ENCODE measurements at regions of chr2 and their contacts with region 1.

Region 1: GRCh38 chr2:171319164-171319810 is 114.5 kb downstream of the METTL8 start:
- DNase-seq: peak; percentile 78
- ATAC-seq: peak; percentile 80
- H3K4me3 Mint-ChIP-seq: peak overlapping the region; percentile 59
- H3K27ac Mint-ChIP-seq: peak overlapping the region; percentile 98
- H3K4me1 Mint-ChIP-seq: peaks cover 67% of the 10 kb centered on the region
- H3K27me3 Mint-ChIP-seq: no peaks in the 10 kb centered on the region

Region 2: GRCh38 chr2:170829036-170829435 is 490.3 kb before region 1 on chr2:
- CTCF ChIA-PET with region 1: no interaction called
- POLR2A ChIA-PET with region 1: no interaction called
- intact Hi-C with region 1: no loop called
- DNase-seq: no peak
- ATAC-seq: no peak
- H3K4me3 Mint-ChIP-seq: no peak overlapping the region
- H3K27ac Mint-ChIP-seq: no peak overlapping the region
- H3K4me1 Mint-ChIP-seq: no peaks in the 10 kb centered on the region
- H3K27me3 Mint-ChIP-seq: peaks cover 54% of the 10 kb centered on the region

Region 3: DNA sequence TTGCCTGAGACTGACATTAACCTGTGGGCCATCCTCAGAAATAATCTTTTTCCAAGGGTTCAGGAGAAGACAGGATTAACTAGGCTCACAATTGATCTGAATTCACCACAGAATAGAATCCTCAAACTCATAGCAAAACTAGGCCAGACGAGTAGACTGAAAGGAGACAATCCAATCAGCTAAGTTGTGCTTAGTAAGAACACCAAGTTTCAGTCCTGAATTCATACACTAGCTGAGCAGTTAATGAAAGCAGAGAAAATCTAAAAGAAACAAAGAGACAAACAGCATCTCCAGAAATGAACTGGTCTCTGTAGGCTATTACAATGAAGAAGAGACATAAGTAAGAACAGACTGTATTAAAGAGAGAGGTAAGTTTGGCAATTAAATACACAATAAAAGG is 300.8 kb before region 1 on chr2:
- CTCF ChIA-PET with region 1: no interaction called
- POLR2A ChIA-PET with region 1: no interaction called
- intact Hi-C with region 1: loop called in 1 of 2 experiments (anchors 1 kb)
- DNase-seq: no peak
- ATAC-seq: peak; percentile 97
- H3K4me3 Mint-ChIP-seq: peak overlapping the region; percentile 4
- H3K27ac Mint-ChIP-seq: peak overlapping the region; percentile 63
- H3K4me1 Mint-ChIP-seq: peaks cover 43% of the 10 kb centered on the region
- H3K27me3 Mint-ChIP-seq: no peaks in the 10 kb centered on the region

Region 4: DNA sequence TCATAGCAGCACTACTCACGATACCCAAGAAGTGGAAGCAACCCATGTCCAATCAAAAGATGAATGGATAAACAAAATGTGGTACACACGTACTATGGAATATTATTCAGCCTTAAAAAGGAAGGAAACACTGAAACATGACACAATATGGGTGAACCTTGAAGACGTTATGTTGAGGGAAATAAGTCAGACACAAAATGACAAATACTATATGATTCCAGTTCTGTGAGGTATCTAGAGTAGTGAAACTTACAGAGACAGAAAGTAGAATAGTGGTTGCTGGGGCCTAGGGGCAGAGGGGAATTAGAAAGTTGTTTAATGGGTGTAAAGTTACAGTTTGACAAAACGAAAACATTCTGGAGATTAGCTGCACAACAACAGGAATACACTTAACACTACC is 183.3 kb before region 1 on chr2:
- CTCF ChIA-PET with region 1: no interaction called
- POLR2A ChIA-PET with region 1: interaction called, 3 read pairs
- intact Hi-C with region 1: loop called (anchors 1 kb)
- DNase-seq: peak; percentile 41
- ATAC-seq: peak; percentile 93
- H3K4me3 Mint-ChIP-seq: peak overlapping the region; percentile 20
- H3K27ac Mint-ChIP-seq: peak overlapping the region; percentile 86
- H3K4me1 Mint-ChIP-seq: peaks cover 73% of the 10 kb centered on the region
- H3K27me3 Mint-ChIP-seq: no peaks in the 10 kb centered on the region

Region 5: GRCh38 chr2:171244970-171245782 is 74.1 kb before region 1 on chr2:
- CTCF ChIA-PET with region 1: no interaction called
- POLR2A ChIA-PET with region 1: no interaction called
- intact Hi-C with region 1: loop called (anchors 2 to 5 kb)
- DNase-seq: no peak
- ATAC-seq: no peak
- H3K4me3 Mint-ChIP-seq: no peak overlapping the region
- H3K27ac Mint-ChIP-seq: no peak overlapping the region
- H3K4me1 Mint-ChIP-seq: peaks cover 42% of the 10 kb centered on the region
- H3K27me3 Mint-ChIP-seq: no peaks in the 10 kb centered on the region

Region 6: DNA sequence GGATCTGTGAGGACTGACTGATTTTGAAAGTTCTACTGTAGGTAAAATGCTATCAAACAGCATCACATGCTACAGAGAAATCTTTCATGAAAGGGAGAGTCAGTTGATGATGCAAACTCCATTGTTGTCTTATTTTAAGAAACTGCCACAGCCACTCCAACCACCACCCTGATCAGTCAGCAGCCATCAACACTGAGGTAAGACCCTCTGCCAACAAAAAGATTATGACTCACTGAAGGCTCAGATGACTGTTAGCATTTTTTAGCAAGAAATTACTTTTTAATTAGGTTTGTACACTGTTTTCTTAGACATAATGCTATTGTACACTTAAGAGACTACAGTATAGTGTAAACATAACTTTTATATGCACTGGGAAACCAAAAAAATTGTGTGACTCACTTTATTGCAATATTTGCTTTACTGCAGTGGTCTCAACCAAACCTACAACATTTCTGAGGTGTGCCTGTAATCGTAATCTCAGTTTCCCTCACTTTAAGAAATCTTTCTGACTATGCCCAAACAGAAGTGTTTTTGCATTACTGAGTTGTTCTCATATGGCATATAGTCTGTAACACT is 71.7 kb after region 1 on chr2:
- CTCF ChIA-PET with region 1: no interaction called
- POLR2A ChIA-PET with region 1: no interaction called
- intact Hi-C with region 1: loop called (anchors 1 kb)
- DNase-seq: peak; percentile 62
- ATAC-seq: peak; percentile 94
- H3K4me3 Mint-ChIP-seq: no peak overlapping the region
- H3K27ac Mint-ChIP-seq: peak overlapping the region; percentile 43
- H3K4me1 Mint-ChIP-seq: peaks cover 24% of the 10 kb centered on the region
- H3K27me3 Mint-ChIP-seq: no peaks in the 10 kb centered on the region

Region 7: GRCh38 chr2:171433763-171434670 is 114.7 kb after region 1 on chr2 and contains the starts of genes DCAF17 and METTL8:
- CTCF ChIA-PET with region 1: interaction called, 3 read pairs
- POLR2A ChIA-PET with region 1: interaction called, 5 read pairs
- intact Hi-C with region 1: loop called (anchors 1 to 2 kb)
- DNase-seq: peak; percentile 97
- ATAC-seq: peak; percentile 91
- H3K4me3 Mint-ChIP-seq: peak within 1 kb of the TSS; percentile 93
- H3K27ac Mint-ChIP-seq: peak within 1 kb of the TSS; percentile 95
- H3K4me1 Mint-ChIP-seq: peaks cover 50% of the 10 kb centered on the region
- H3K27me3 Mint-ChIP-seq: no peaks in the 10 kb centered on the region
- total RNA-seq, gene DCAF17: 18.3 TPM
- total RNA-seq, gene METTL8: 39.5 to 47.9 TPM

Measured in activated CD4-positive, alpha-beta T cell treated with anti-CD3 and anti-CD28 coated beads for 36 hours (primary cell).